ENCODE measurements at regions of chr21 and their contacts with region 1.

Region 1: GRCh38 chr21:32578107-32578692 is 7.1 kb downstream of the TCP10L start:
- DNase-seq: peak; percentile 72
- ATAC-seq: peak; percentile 94
- H3K4me3 Mint-ChIP-seq: no peak overlapping the region
- H3K27ac Mint-ChIP-seq: no peak overlapping the region
- H3K4me1 Mint-ChIP-seq: peaks cover 8% of the 10 kb centered on the region
- H3K27me3 Mint-ChIP-seq: no peaks in the 10 kb centered on the region
- CTCF ChIP-seq: peak; percentile 52; the same call in 1 of the 2 replicates

Region 2: GRCh38 chr21:32562426-32562825 is 15.8 kb before region 1 on chr21:
- CTCF ChIA-PET with region 1: interaction called, 10 read pairs
- POLR2A ChIA-PET with region 1: no interaction called
- DNase-seq: peak; percentile 39
- ATAC-seq: peak; percentile 63
- H3K4me3 Mint-ChIP-seq: no peak overlapping the region
- H3K27ac Mint-ChIP-seq: peak overlapping the region; percentile 94
- H3K4me1 Mint-ChIP-seq: peaks cover 49% of the 10 kb centered on the region
- H3K27me3 Mint-ChIP-seq: no peaks in the 10 kb centered on the region
- CTCF ChIP-seq: no peak

Region 3: DNA sequence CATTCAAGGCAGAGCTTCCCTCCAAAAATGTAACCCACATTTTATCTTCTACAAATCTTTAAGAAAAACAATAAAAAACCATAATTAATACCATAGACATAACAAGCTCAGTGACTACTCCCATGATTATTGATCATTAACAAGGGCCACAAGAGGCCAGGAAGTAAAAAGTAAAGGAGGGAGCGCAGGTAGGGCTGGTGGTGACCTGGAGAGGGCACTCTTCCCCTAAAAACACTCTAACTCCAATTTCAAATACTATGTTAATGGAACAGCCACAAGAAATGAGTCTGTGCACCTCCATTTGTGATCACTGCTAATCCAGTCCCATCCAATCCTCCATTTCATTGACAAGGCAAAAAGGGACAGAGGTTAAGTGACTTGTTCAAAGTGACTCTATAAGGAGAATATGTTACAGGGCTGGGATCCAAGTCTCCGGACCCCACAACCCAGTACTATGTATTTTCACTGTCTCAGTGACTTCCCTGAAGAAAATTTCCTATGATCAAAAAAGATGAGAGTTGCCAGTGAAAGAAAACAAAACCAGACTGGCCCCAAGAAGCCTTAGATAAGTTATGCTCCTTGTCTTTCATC is 75.2 kb after region 1 on chr21:
- CTCF ChIA-PET with region 1: no interaction called
- POLR2A ChIA-PET with region 1: no interaction called
- DNase-seq: peak; percentile 40
- ATAC-seq: peak; percentile 89
- H3K4me3 Mint-ChIP-seq: no peak overlapping the region
- H3K27ac Mint-ChIP-seq: no peak overlapping the region
- H3K4me1 Mint-ChIP-seq: no peaks in the 10 kb centered on the region
- H3K27me3 Mint-ChIP-seq: no peaks in the 10 kb centered on the region
- CTCF ChIP-seq: 0 out of 2 replicates have a peak, but pooled peaks have one; percentile 43

Measured in WTC11 (cell line).